H1 (cell line): ENCODE measurements at regions of chr7 and their contacts with region 1.

Region 1: DNA sequence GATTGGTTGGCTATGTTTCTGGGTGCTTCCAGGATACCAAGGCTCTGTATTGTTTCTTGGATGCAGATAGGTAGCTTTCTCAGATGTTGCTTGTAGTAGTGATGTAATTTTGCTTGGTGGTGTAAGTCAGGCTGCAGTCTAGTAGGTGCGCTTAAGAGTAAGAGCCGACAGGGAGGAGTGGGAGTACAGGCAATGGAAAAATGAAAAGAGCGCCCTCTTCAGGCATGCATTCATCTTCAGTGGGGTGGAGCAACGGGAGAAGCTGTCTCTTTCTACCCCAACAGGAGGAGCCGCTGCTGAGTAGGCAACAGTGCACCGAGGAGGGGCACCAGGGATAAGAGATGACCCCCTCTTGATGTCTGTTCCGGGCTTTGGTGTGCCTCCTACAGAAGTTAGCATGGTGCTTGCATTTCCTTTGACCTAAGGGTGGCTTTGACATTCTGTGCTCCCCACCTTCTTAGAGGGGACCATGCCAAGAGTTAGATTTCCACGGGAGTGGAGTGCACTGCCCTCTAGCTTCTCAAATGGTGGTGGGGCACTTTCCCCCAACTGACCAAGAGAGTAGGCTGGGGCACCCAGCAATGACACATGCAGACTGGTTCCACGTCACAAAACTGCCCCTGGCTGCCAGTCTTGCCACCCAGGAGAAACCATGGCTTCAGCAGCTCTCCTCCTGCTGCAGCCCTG is 56.1 kb downstream of the ZNF783 start:
- DNase-seq: peak; percentile 38 to 81
- H3K4me3 ChIP-seq: no peak overlapping the region
- H3K27ac ChIP-seq: no peak overlapping the region
- H3K4me1 ChIP-seq: peaks cover 0 to 9% (median 3%) of the 10 kb centered on the region in 4 experiments; a peak in 4 of 7 replicates
- H3K27me3 ChIP-seq: no peaks in the 10 kb centered on the region
- CTCF ChIP-seq: peak; percentile 73 to 99 (median 96)
- EP300 ChIP-seq: no peak
- POLR2A ChIP-seq: no peak
- RAD21 ChIP-seq: peak; percentile 59 to 68

Region 2: GRCh38 chr7:149291036-149291780 is 26.9 kb before region 1 on chr7:
- CTCF ChIA-PET with region 1: interaction called, 13 read pairs
- POLR2A ChIA-PET with region 1: no interaction called
- DNase-seq: no peak
- H3K4me3 ChIP-seq: no peak overlapping the region
- H3K27ac ChIP-seq: no peak overlapping the region
- H3K4me1 ChIP-seq: peaks cover 0 to 3% (median 0%) of the 10 kb centered on the region in 4 experiments; a peak in 1 of 7 replicates
- H3K27me3 ChIP-seq: no peaks in the 10 kb centered on the region
- CTCF ChIP-seq: no peak
- EP300 ChIP-seq: no peak
- POLR2A ChIP-seq: no peak
- RAD21 ChIP-seq: no peak

Region 3: GRCh38 chr7:149330914-149331567 is 12.9 kb after region 1 on chr7:
- CTCF ChIA-PET with region 1: interaction called, 24 read pairs
- POLR2A ChIA-PET with region 1: interaction called, 7 read pairs
- DNase-seq: no peak
- H3K4me3 ChIP-seq: no peak overlapping the region
- H3K27ac ChIP-seq: no peak overlapping the region
- H3K4me1 ChIP-seq: no peaks in the 10 kb centered on the region
- H3K27me3 ChIP-seq: no peaks in the 10 kb centered on the region
- CTCF ChIP-seq: no peak
- EP300 ChIP-seq: no peak
- POLR2A ChIP-seq: no peak
- RAD21 ChIP-seq: no peak

Region 4: DNA sequence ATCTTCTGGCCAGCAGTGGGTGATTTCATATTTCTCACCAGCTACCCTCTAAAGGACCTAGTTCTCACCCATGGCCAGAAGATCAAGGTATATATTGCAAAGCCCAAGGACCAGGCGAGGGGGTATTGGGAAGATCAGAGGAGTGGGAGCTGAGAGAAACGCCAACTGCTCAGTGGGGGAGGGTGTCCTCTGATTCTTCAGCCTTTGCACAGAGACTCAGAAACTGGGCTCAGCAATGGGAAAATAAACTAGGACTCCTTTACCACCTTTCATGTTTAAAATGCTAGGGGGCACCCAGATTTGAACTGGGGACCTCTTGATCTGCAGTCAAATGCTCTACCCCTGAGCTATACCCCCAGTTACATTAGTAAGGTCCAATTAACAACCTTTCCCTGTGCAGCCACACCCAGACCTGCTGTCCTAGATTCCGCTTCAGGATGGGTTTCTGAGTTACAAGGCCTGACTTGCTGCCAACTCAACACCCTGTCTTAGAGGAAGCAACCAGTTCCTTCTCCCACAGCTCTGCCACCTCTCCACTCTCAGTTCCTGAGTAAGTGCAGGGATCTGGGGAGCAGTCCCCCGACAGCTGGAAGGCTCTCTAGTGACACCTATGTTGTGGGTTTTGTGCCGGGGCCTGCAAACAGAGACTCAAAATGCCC is 37.4 kb after region 1 on chr7:
- CTCF ChIA-PET with region 1: interaction called, 21 read pairs
- POLR2A ChIA-PET with region 1: interaction called, 4 read pairs
- DNase-seq: peak; percentile 81 to 87
- H3K4me3 ChIP-seq: peak overlapping the region; percentile 17 to 58 (median 42); a peak in 7 of 8 replicates
- H3K27ac ChIP-seq: no peak overlapping the region; the same call in 1 of the 2 replicates
- H3K4me1 ChIP-seq: peaks cover 0 to 3% (median 0%) of the 10 kb centered on the region in 4 experiments; a peak in 3 of 7 replicates
- H3K27me3 ChIP-seq: no peaks in the 10 kb centered on the region
- CTCF ChIP-seq: peak; percentile 37 to 56 (median 50)
- EP300 ChIP-seq: no peak
- POLR2A ChIP-seq: no peak
- RAD21 ChIP-seq: peak; percentile 39 to 58; a peak in 3 of 4 replicates

Region 5: DNA sequence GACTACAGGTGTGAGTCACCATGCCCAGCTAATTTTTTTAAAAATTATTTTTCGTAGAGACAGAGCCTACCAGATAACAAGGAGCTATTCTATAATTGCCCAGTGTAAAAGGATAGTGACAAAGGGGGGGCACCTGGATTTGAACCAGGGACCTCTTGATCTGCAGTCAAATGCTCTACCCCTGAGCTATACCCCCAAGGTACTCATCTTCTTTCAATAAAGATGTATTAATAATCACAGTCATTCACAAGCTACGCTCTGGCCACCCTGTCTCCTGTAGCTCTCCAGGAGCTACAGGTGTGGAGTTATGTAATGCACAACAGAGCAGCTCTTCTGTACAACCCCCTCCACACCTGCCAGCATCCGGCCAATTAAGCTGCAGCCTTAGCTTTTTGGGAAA is 59.3 kb after region 1 on chr7:
- CTCF ChIA-PET with region 1: interaction called, 16 read pairs
- POLR2A ChIA-PET with region 1: no interaction called
- DNase-seq: no peak
- H3K4me3 ChIP-seq: no peak overlapping the region
- H3K27ac ChIP-seq: no peak overlapping the region
- H3K4me1 ChIP-seq: no peaks in the 10 kb centered on the region
- H3K27me3 ChIP-seq: no peaks in the 10 kb centered on the region
- CTCF ChIP-seq: no peak
- EP300 ChIP-seq: no peak
- POLR2A ChIP-seq: no peak
- RAD21 ChIP-seq: no peak

Region 6: GRCh38 chr7:149409895-149410294 is 91.8 kb after region 1 on chr7:
- CTCF ChIA-PET with region 1: interaction called, 16 read pairs
- POLR2A ChIA-PET with region 1: no interaction called
- DNase-seq: no peak
- H3K4me3 ChIP-seq: no peak overlapping the region
- H3K27ac ChIP-seq: no peak overlapping the region
- H3K4me1 ChIP-seq: peaks cover 0 to 2% (median 0%) of the 10 kb centered on the region in 4 experiments; a peak in 1 of 7 replicates
- H3K27me3 ChIP-seq: no peaks in the 10 kb centered on the region
- CTCF ChIP-seq: no peak
- EP300 ChIP-seq: no peak
- POLR2A ChIP-seq: no peak
- RAD21 ChIP-seq: no peak